Activated CD4-positive, alpha-beta memory T cell treated with anti-CD3 and anti-CD28 coated beads for 36 hours (primary cell): ENCODE measurements at regions of chr6 and their contacts with region 1.

Region 1: GRCh38 chr6:33771146-33772081 is 17.5 kb downstream of the LEMD2 start:
- DNase-seq: peak; percentile 70
- H3K4me3 Mint-ChIP-seq: no peak overlapping the region
- H3K27ac Mint-ChIP-seq: no peak overlapping the region
- H3K4me1 Mint-ChIP-seq: no peaks in the 10 kb centered on the region
- H3K27me3 Mint-ChIP-seq: no peaks in the 10 kb centered on the region

Region 2: DNA sequence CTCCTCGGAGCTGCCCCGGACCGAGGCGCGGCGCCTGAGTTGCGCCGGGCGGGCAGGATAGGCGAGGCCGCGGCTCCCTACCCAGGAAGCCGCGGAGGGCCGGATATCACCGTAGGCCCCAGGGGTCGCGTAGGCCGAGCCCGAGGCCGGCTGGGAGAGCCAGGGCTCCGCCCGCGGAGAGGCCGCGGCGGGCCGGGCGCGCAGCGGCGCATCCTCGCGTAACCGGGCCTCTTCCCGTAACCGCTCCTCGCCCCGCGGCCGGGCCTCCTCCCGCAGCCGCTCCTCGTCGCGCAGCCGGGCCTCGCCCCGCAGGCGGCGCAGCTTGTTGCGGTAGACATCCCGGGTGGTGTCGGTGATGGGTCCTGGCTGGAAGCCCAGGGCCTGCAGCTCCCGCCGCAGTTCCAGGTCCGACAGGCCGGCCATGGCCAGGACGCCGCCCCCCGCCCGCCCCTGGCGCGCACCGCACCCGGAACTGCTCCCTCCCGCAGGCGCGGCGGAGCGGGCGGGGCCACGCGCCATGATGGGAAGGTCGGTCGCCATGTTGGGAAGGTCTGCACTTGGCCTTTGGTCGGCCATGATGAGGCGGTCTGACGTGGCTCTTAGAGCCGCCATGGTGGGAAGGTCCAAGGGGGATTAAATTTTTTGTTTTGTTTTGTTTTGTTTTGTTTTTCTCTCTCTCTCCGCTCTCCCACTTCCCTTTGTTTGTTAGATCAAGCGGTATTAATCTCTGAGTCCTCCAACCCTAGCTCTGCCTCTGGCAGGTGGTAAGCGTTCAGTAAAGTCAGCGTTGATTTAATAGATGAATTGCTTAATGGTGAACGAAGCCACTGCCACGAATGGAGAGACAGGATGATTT is 17.5 kb after region 1 on chr6 and contains the start of gene LEMD2:
- CTCF ChIA-PET with region 1: interaction called, 21 read pairs
- POLR2A ChIA-PET with region 1: interaction called, 5 read pairs
- intact Hi-C with region 1: no loop called
- DNase-seq: peak; percentile 95
- H3K4me3 Mint-ChIP-seq: peak within 1 kb of the TSS; percentile 96
- H3K27ac Mint-ChIP-seq: peak within 1 kb of the TSS; percentile 97
- H3K4me1 Mint-ChIP-seq: peaks cover 42% of the 10 kb centered on the region
- H3K27me3 Mint-ChIP-seq: no peaks in the 10 kb centered on the region
- total RNA-seq, gene LEMD2: 51.4 to 54.8 TPM

Region 3: DNA sequence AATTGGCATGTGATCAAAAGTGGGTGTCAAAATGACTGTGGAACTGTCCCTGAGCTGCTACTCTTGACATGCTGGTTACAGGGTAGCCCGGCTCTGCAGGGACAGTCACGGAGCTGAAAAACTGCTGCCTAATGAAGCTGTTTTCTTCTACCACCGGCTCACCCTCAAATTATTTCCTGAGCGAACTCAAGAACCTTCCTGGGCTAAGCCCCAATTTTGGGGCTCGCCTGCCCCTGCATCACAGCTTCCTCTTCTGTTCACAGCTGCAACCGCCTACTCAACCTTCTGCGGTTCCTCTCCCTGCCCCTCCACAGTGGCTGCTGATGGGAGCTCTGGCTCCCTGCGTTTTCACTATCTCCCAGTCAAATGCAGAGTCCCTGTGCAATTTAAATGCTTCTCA is 143.2 kb after region 1 on chr6:
- CTCF ChIA-PET with region 1: interaction called, 10 read pairs
- POLR2A ChIA-PET with region 1: no interaction called
- intact Hi-C with region 1: no loop called
- DNase-seq: peak; percentile 65
- H3K4me3 Mint-ChIP-seq: no peak overlapping the region
- H3K27ac Mint-ChIP-seq: peak overlapping the region; percentile 35
- H3K4me1 Mint-ChIP-seq: peaks cover 24% of the 10 kb centered on the region
- H3K27me3 Mint-ChIP-seq: no peaks in the 10 kb centered on the region

Region 4: GRCh38 chr6:33926451-33926850 is 155.0 kb after region 1 on chr6:
- CTCF ChIA-PET with region 1: no interaction called
- POLR2A ChIA-PET with region 1: no interaction called
- intact Hi-C with region 1: no loop called
- DNase-seq: no peak
- H3K4me3 Mint-ChIP-seq: no peak overlapping the region
- H3K27ac Mint-ChIP-seq: no peak overlapping the region
- H3K4me1 Mint-ChIP-seq: peaks cover 2% of the 10 kb centered on the region
- H3K27me3 Mint-ChIP-seq: peaks cover 1% of the 10 kb centered on the region

Region 5: GRCh38 chr6:34027445-34027936 is 256.1 kb after region 1 on chr6:
- CTCF ChIA-PET with region 1: interaction called, 254 read pairs
- POLR2A ChIA-PET with region 1: interaction called, 7 read pairs
- intact Hi-C with region 1: loop called (anchors 1 kb)
- DNase-seq: peak; percentile 65
- H3K4me3 Mint-ChIP-seq: no peak overlapping the region
- H3K27ac Mint-ChIP-seq: no peak overlapping the region
- H3K4me1 Mint-ChIP-seq: no peaks in the 10 kb centered on the region
- H3K27me3 Mint-ChIP-seq: no peaks in the 10 kb centered on the region

Region 6: GRCh38 chr6:34055223-34055933 is 284.0 kb after region 1 on chr6:
- CTCF ChIA-PET with region 1: interaction called, 12 read pairs
- POLR2A ChIA-PET with region 1: no interaction called
- intact Hi-C with region 1: no loop called
- DNase-seq: peak; percentile 75
- H3K4me3 Mint-ChIP-seq: no peak overlapping the region
- H3K27ac Mint-ChIP-seq: no peak overlapping the region
- H3K4me1 Mint-ChIP-seq: no peaks in the 10 kb centered on the region
- H3K27me3 Mint-ChIP-seq: no peaks in the 10 kb centered on the region

Region 7: GRCh38 chr6:34154668-34155447 is 383.4 kb after region 1 on chr6:
- CTCF ChIA-PET with region 1: interaction called, 56 read pairs
- POLR2A ChIA-PET with region 1: no interaction called
- intact Hi-C with region 1: loop called (anchors 5 kb)
- DNase-seq: peak; percentile 73
- H3K4me3 Mint-ChIP-seq: no peak overlapping the region
- H3K27ac Mint-ChIP-seq: no peak overlapping the region
- H3K4me1 Mint-ChIP-seq: peaks cover 7% of the 10 kb centered on the region
- H3K27me3 Mint-ChIP-seq: peaks cover 42% of the 10 kb centered on the region